T-cell (primary cell): ENCODE measurements at regions of chr6 and their contacts with region 1.

Region 1: GRCh38 chr6:37516076-37516919 is 16.6 kb upstream of the CCDC167 start:
- DNase-seq: peak; percentile 75 to 98 (median 94)
- ATAC-seq: peak; percentile 86 to 90 (median 88)
- H3K4me3 ChIP-seq: peak overlapping the region; percentile 49 to 58
- H3K4me3 Mint-ChIP-seq: peak overlapping the region; percentile 76 to 91 (median 83)
- H3K27ac ChIP-seq: peak overlapping the region; percentile 100
- H3K27ac Mint-ChIP-seq: peak overlapping the region; percentile 100
- H3K4me1 ChIP-seq: peaks cover 59 to 94% of the 10 kb centered on the region in 2 experiments
- H3K4me1 Mint-ChIP-seq: peaks cover 79 to 90% (median 90%) of the 10 kb centered on the region in 3 donors
- H3K27me3 ChIP-seq: no peaks in the 10 kb centered on the region
- H3K27me3 Mint-ChIP-seq: no peaks in the 10 kb centered on the region

Region 2: GRCh38 chr6:37454420-37455140 is 61.7 kb before region 1 on chr6:
- CTCF ChIA-PET with region 1: no interaction called
- POLR2A ChIA-PET with region 1: no interaction called
- DNase-seq: no peak
- ATAC-seq: no peak
- H3K4me3 ChIP-seq: no peak overlapping the region
- H3K4me3 Mint-ChIP-seq: no peak overlapping the region
- H3K27ac ChIP-seq: no peak overlapping the region
- H3K27ac Mint-ChIP-seq: no peak overlapping the region
- H3K4me1 ChIP-seq: no peaks in the 10 kb centered on the region
- H3K4me1 Mint-ChIP-seq: peaks cover 0 to 9% (median 0%) of the 10 kb centered on the region in 3 donors
- H3K27me3 ChIP-seq: no peaks in the 10 kb centered on the region
- H3K27me3 Mint-ChIP-seq: no peaks in the 10 kb centered on the region

Region 3: GRCh38 chr6:37483917-37484785 is 32.1 kb before region 1 on chr6:
- CTCF ChIA-PET with region 1: interaction called in 1 of 2 experiments, 3 read pairs
- POLR2A ChIA-PET with region 1: interaction called, 3 to 10 read pairs
- DNase-seq: peak; percentile 50 to 89 (median 73)
- ATAC-seq: peak; percentile 84 to 86 (median 85)
- H3K4me3 ChIP-seq: no peak overlapping the region
- H3K4me3 Mint-ChIP-seq: no peak overlapping the region
- H3K27ac ChIP-seq: peak overlapping the region; percentile 39
- H3K27ac Mint-ChIP-seq: peak overlapping the region in 1 of 2 donors; percentile 16
- H3K4me1 ChIP-seq: peaks cover 0 to 45% of the 10 kb centered on the region in 2 experiments
- H3K4me1 Mint-ChIP-seq: peaks cover 19 to 30% (median 21%) of the 10 kb centered on the region in 3 donors
- H3K27me3 ChIP-seq: no peaks in the 10 kb centered on the region
- H3K27me3 Mint-ChIP-seq: no peaks in the 10 kb centered on the region

Region 4: DNA sequence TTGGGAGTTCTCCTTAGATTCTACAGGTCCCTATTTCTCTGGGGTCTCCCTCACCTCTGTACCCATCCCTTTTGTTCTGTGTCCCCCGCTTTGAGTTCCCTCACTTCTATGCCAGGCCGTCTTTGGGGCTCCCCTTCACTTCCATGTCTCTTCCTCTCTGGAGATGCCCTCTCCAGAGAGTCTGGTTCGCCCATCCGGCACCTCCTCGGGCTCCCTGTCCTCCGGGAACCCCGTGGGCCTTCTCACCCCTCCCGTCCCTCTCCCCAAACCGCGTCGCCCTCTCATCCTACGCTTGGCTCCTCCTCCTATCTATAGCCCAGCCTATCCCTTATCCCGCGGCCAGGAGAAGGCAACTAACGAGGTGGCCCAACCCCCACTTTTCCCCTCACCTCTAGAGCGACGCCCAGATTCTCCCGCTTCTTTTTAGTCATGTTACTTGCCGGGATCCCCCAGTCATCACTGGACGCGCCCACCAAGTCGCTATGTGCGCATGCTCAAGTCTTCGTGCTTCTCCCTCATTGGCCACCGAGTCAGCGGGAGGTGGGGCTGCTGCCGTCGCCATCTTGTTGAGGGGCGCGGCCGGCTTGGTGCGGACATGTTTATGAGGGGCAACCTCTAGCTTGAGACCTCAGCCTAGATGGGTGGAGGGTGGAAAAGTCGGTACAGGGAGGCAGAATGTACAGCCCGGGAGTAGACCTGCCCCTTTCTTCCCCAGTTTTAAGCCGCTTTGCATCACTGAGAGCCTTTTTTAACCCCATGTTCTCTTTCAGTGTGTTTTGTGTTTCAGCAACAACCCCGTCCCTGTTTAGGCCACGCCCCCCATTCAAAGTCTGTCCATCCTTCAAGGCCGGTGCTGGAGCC is 16.6 kb before region 1 on chr6 and contains the start of gene CCDC167:
- CTCF ChIA-PET with region 1: interaction called, 4 to 38 read pairs
- POLR2A ChIA-PET with region 1: interaction called, 37 to 157 read pairs
- DNase-seq: peak; percentile 86 to 98 (median 93)
- ATAC-seq: peak; percentile 70 to 90 (median 86)
- H3K4me3 ChIP-seq: peak within 1 kb of the TSS; percentile 80 to 85
- H3K4me3 Mint-ChIP-seq: peak within 1 kb of the TSS; percentile 94 to 96 (median 94)
- H3K27ac ChIP-seq: peak within 1 kb of the TSS; percentile 81
- H3K27ac Mint-ChIP-seq: peak within 1 kb of the TSS; percentile 90 to 99
- H3K4me1 ChIP-seq: peaks cover 45 to 87% of the 10 kb centered on the region in 2 experiments
- H3K4me1 Mint-ChIP-seq: peaks cover 61 to 89% (median 82%) of the 10 kb centered on the region in 3 donors
- H3K27me3 ChIP-seq: no peaks in the 10 kb centered on the region
- H3K27me3 Mint-ChIP-seq: no peaks in the 10 kb centered on the region
- total RNA-seq, gene CCDC167: 14.3 to 25.2 (median 17.8) TPM

Region 5: GRCh38 chr6:37587866-37588734 is 71.8 kb after region 1 on chr6:
- CTCF ChIA-PET with region 1: no interaction called
- POLR2A ChIA-PET with region 1: no interaction called
- DNase-seq: no peak
- ATAC-seq: no peak
- H3K4me3 ChIP-seq: no peak overlapping the region
- H3K4me3 Mint-ChIP-seq: no peak overlapping the region
- H3K27ac ChIP-seq: no peak overlapping the region
- H3K27ac Mint-ChIP-seq: no peak overlapping the region
- H3K4me1 ChIP-seq: no peaks in the 10 kb centered on the region
- H3K4me1 Mint-ChIP-seq: no peaks in the 10 kb centered on the region
- H3K27me3 ChIP-seq: peaks cover 0 to 27% of the 10 kb centered on the region in 2 experiments
- H3K27me3 Mint-ChIP-seq: no peaks in the 10 kb centered on the region

Region 6: GRCh38 chr6:38336922-38337321 is 820.6 kb after region 1 on chr6:
- CTCF ChIA-PET with region 1: no interaction called
- POLR2A ChIA-PET with region 1: interaction called in 1 of 2 experiments, 10 read pairs
- DNase-seq: no peak
- ATAC-seq: no peak
- H3K4me3 ChIP-seq: no peak overlapping the region
- H3K4me3 Mint-ChIP-seq: no peak overlapping the region
- H3K27ac ChIP-seq: no peak overlapping the region
- H3K27ac Mint-ChIP-seq: no peak overlapping the region
- H3K4me1 ChIP-seq: no peaks in the 10 kb centered on the region
- H3K4me1 Mint-ChIP-seq: peaks cover 3 to 10% (median 3%) of the 10 kb centered on the region in 3 donors
- H3K27me3 ChIP-seq: no peaks in the 10 kb centered on the region
- H3K27me3 Mint-ChIP-seq: no peaks in the 10 kb centered on the region